ENCODE measurements at regions of chr7 and their contacts with region 1.

Region 1: GRCh38 chr7:16062269-16062668 is 359.1 kb downstream of the CRPPA start:
- DNase-seq: no peak
- ATAC-seq: no peak
- H3K4me3 ChIP-seq: no peak overlapping the region
- H3K27ac ChIP-seq: peak overlapping the region; percentile 41
- H3K4me1 ChIP-seq: peaks cover 6% of the 10 kb centered on the region
- H3K27me3 ChIP-seq: no peaks in the 10 kb centered on the region
- CTCF ChIP-seq: no peak

Region 2: DNA sequence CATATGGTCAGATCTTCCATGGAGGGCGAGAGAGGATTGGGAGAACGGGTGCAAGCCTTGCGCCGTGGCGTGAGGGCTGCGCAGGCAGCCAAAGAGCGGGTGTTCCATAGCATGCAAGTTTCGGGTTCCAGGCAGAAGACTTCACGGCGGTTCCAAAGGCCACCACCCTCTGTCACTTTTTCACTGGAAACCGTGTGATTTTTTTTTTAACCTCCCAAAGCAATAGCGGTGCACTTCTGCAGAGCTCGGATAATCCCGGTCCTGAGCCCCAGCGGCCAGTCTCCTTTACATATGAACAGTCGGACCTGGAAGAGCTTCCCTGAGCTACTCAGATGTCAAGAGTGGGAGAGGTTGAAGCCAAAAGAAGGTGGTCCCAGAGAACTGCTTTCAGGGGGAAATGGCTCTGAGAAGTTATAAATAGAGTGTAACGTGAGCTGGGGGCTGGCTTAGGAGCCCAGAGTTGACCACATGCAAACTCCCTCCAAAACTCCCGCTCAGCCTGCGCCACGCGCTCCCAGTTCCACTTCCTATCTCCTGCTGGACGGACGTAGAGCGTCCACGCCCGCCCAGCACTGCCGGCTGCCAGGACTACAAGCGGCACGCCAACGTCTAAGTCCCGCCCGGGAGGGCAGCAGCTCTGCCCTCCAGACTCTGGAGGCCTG is 375.8 kb before region 1 on chr7 and contains the start of gene MEOX2:
- intact Hi-C with region 1: loop called in 1 of 2 experiments (anchors 10 kb)
- DNase-seq: peak; percentile 85 to 91
- ATAC-seq: peak; percentile 60 to 87 (median 84)
- H3K4me3 ChIP-seq: peak within 1 kb of the TSS; percentile 71
- H3K27ac ChIP-seq: peak within 1 kb of the TSS; percentile 76
- H3K4me1 ChIP-seq: no peaks in the 10 kb centered on the region
- H3K27me3 ChIP-seq: peaks cover 0 to 37% (median 12%) of the 10 kb centered on the region in 3 donors
- CTCF ChIP-seq: no peak
- total RNA-seq, gene MEOX2: 3.8 to 6.9 (median 5.3) TPM

Region 3: DNA sequence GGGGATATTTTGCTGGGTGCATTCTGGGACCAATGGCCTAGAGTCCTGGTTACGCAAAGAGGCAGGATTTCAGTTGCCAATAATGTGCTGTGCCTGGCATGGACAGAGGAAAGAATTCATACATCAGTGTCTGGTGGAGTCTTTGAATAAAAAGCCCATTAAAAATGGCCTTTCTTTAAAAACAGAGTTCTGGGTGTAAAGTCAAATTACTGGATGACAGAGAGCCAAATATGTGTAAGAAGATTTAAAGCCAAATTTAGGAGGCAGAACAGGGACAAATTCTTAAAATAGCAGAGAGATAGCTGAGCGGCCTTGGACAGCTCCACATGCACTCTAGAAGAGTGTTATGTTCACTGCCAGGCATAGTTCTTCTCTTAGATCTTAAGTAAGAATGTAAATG is 315.0 kb before region 1 on chr7:
- intact Hi-C with region 1: loop called in 1 of 2 experiments (anchors 10 kb)
- DNase-seq: no peak
- ATAC-seq: peak in 1 of 4 donors; percentile 42
- H3K4me3 ChIP-seq: no peak overlapping the region
- H3K27ac ChIP-seq: no peak overlapping the region
- H3K4me1 ChIP-seq: peaks cover 8% of the 10 kb centered on the region
- H3K27me3 ChIP-seq: no peaks in the 10 kb centered on the region
- CTCF ChIP-seq: no peak

Region 4: GRCh38 chr7:15833008-15833407 is 229.3 kb before region 1 on chr7:
- intact Hi-C with region 1: no loop called
- DNase-seq: peak in 1 of 2 donors; percentile 39
- ATAC-seq: no peak
- H3K4me3 ChIP-seq: no peak overlapping the region
- H3K27ac ChIP-seq: no peak overlapping the region
- H3K4me1 ChIP-seq: no peaks in the 10 kb centered on the region
- H3K27me3 ChIP-seq: no peaks in the 10 kb centered on the region
- CTCF ChIP-seq: no peak

Measured in psoas muscle (tissue), 8 donors.